Dendritic cell treated with granulocyte-macrophage colony-stimulating factor and Interleukin-4, amounts not matched to agents 40 ng/mL and 50 ng/mL, for 4 days (primary cell): ENCODE measurements at regions of chr6 and their contacts with region 1.

Region 1: DNA sequence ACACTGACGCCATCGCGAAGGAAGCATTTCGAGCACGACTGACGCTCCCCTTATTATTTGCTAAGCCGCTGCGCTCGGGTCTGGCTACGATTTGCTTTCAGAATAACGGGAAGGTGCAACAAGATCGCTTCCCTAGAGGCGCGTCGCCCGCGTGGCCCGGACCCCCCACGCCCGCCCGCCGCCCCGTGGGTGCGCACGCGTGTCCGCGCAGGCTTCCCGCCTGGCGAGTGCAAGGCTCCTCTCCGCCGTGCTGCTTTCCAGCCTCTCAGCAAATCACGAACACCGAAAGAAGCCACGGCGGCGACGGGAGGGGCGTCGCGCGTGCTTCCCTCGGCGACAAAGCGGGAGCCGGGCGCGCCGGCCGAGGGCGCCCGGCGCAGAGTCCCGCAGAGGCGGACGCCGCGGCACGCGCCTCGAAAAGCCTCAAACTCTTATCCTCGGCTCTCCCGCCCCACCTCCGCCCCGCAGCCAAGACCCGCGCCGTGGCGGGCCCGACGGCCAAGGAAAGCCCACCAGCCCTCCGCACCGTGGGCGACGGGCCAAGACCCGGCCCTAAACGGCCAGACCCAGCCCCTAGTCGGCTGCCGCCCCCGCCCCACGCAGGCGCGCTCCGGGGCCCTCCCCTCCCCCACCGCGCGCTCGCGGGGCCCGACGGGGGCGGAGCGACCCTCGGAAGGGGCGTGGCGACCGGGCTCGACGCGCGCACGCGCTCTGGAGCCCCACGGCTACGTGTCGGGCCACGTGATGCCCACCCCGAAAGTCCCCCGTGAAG is 987 bp upstream of the QKI start:
- H3K4me3 Mint-ChIP-seq: peak overlapping the region; percentile 81
- H3K27ac Mint-ChIP-seq: peak overlapping the region; percentile 89
- H3K4me1 Mint-ChIP-seq: peaks cover 22% of the 10 kb centered on the region
- H3K27me3 Mint-ChIP-seq: no peaks in the 10 kb centered on the region

Region 2: GRCh38 chr6:163085861-163086623 is 327.5 kb before region 1 on chr6:
- intact Hi-C with region 1: no loop called
- H3K4me3 Mint-ChIP-seq: no peak overlapping the region
- H3K27ac Mint-ChIP-seq: no peak overlapping the region
- H3K4me1 Mint-ChIP-seq: no peaks in the 10 kb centered on the region
- H3K27me3 Mint-ChIP-seq: no peaks in the 10 kb centered on the region

Region 3: DNA sequence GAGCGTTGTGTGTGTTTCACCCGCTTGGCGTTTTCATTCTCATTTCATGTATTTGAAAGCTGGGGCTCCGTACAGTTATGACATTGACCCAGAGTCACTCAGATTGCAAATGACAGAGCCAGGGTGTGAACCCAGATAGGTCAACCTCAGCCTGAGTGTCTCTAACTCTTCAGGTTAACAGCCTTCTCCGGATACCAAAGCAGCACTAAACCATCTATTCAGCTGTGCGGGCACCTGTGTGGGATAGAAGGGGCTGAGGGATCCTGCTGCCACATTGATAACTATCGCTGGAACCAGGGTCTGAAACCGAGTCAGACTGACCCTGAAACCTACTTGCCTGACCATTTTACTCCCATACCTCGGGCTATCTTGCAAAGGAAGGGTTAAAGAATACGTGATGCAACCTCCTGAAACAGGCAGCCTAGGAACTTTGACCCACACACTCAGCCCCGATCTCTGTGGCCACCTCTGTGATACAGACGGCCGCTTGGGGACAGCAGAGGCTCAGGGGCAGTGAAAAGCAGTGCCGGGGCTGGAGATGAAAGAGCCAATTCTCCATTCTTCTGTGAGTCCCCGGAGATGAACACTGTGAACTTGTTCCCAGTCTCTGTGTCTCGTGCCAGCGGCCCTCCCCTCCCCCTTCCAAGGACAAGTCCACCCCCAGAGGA is 232.5 kb before region 1 on chr6:
- intact Hi-C with region 1: loop called (anchors 2 kb)
- H3K4me3 Mint-ChIP-seq: no peak overlapping the region
- H3K27ac Mint-ChIP-seq: no peak overlapping the region
- H3K4me1 Mint-ChIP-seq: peaks cover 14% of the 10 kb centered on the region
- H3K27me3 Mint-ChIP-seq: peaks cover 14% of the 10 kb centered on the region

Region 4: GRCh38 chr6:163355426-163355991 is 58.0 kb before region 1 on chr6:
- intact Hi-C with region 1: loop called (anchors 1 kb)
- H3K4me3 Mint-ChIP-seq: peak overlapping the region; percentile 62
- H3K27ac Mint-ChIP-seq: no peak overlapping the region
- H3K4me1 Mint-ChIP-seq: peaks cover 15% of the 10 kb centered on the region
- H3K27me3 Mint-ChIP-seq: no peaks in the 10 kb centered on the region

Region 5: GRCh38 chr6:163383912-163384311 is 29.6 kb before region 1 on chr6:
- intact Hi-C with region 1: loop called (anchors 2 kb)
- H3K4me3 Mint-ChIP-seq: no peak overlapping the region
- H3K27ac Mint-ChIP-seq: no peak overlapping the region
- H3K4me1 Mint-ChIP-seq: peaks cover 34% of the 10 kb centered on the region
- H3K27me3 Mint-ChIP-seq: no peaks in the 10 kb centered on the region

Region 6: DNA sequence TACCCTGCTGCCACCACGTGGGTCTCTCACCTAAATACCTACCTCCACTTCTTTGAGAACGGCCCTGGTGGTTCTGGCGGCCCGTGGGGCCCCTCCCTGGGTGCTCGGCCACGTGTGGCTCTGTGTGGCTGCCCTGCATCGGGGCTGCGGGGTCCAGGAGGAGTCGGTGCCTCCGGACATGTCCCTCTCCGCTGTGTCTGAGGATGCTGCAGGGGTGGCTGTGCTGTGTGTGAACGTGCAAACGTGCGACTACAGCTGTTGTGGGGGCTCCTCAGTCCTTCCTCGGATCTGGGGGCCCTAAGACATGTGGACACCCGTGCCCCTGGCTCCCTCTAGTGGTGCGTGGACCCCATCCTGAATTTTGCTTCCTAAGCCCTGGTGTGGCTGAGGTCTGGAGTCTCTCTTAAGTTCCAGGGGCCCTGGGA is 692.8 kb after region 1 on chr6:
- intact Hi-C with region 1: loop called (anchors 5 kb)
- H3K4me3 Mint-ChIP-seq: no peak overlapping the region
- H3K27ac Mint-ChIP-seq: no peak overlapping the region
- H3K4me1 Mint-ChIP-seq: peaks cover 16% of the 10 kb centered on the region
- H3K27me3 Mint-ChIP-seq: peaks cover 33% of the 10 kb centered on the region